ENCODE measurements at regions of chr17 and their contacts with region 1.

Region 1: DNA sequence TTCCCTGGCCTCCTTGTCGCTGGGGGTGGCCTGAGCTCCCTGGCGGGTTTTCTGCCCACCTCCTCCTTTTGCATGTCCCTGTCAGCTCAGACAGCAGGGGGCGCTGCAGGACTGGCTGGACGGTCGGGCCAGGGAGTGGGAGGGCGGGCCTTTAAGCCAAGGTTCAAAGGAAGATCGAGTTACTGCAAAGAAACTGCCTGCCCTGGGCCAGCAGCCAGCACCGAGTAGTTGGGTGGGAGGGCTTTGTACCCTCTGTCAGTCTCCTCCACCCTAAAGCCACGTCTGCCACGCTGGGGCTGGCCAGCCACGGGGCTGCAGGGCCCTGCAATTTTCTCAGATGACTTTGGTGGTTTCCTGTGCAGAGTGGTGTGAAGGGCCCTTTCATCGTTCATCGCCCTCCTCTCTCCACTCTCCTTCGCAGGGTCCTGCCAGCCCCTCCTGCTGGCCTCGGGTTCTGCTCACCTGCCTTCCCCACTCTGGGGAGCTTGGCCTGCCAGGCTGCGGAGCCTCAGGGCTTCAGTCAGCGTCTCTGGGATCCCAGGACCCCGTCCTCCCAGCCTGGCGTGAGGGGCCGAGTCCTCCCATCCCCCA is 12.3 kb downstream of the GPR142 start:
- DNase-seq: peak; percentile 83
- ATAC-seq: peak; percentile 73
- H3K4me3 ChIP-seq: no peak overlapping the region
- H3K4me3 Mint-ChIP-seq: no peak overlapping the region
- H3K27ac ChIP-seq: no peak overlapping the region
- H3K27ac Mint-ChIP-seq: no peak overlapping the region
- H3K4me1 ChIP-seq: peaks cover 5 to 9% of the 10 kb centered on the region in 2 donors
- H3K4me1 Mint-ChIP-seq: no peaks in the 10 kb centered on the region
- H3K27me3 ChIP-seq: peaks cover 0 to 15% (median 3%) of the 10 kb centered on the region in 4 experiments
- H3K27me3 Mint-ChIP-seq: peaks cover 19% of the 10 kb centered on the region
- CTCF ChIP-seq: peak; percentile 76

Region 2: DNA sequence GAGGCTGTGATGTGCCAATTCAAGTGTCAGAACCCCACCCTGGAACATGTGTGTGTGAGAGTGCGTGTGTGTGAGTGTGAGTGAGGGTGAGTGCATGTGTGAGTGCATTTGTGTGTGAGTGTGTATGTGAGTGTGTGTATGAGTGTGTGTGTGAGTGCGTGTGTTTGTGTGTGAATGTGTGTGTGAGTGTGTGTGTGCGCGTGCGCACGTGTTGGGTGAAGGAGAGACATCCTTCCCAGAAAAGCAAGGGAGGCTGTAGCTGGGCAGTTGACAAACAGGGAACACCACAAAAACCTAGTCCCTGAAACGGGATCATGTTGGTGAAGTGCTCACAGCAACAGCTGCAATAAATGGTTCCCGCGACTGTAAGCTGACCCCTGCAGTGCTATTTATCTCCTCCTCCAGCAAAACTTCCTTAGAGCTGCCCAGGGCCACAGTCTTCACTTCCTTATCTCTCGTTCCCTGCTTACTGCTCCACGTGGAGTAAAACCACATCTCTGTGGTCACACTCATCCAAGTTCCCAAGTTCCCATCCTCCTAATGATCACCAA is 216.2 kb before region 1 on chr17:
- CTCF ChIA-PET with region 1: no interaction called
- POLR2A ChIA-PET with region 1: no interaction called
- intact Hi-C with region 1: no loop called
- DNase-seq: no peak
- ATAC-seq: no peak
- H3K4me3 ChIP-seq: no peak overlapping the region
- H3K4me3 Mint-ChIP-seq: no peak overlapping the region
- H3K27ac ChIP-seq: no peak overlapping the region
- H3K27ac Mint-ChIP-seq: no peak overlapping the region
- H3K4me1 ChIP-seq: no peaks in the 10 kb centered on the region
- H3K4me1 Mint-ChIP-seq: peaks cover 4% of the 10 kb centered on the region
- H3K27me3 ChIP-seq: peaks cover 0 to 11% (median 9%) of the 10 kb centered on the region in 4 experiments
- H3K27me3 Mint-ChIP-seq: peaks cover 37% of the 10 kb centered on the region
- CTCF ChIP-seq: no peak

Region 3: GRCh38 chr17:74282587-74283370 is 96.8 kb before region 1 on chr17:
- CTCF ChIA-PET with region 1: no interaction called
- POLR2A ChIA-PET with region 1: no interaction called
- intact Hi-C with region 1: no loop called
- DNase-seq: no peak
- ATAC-seq: no peak
- H3K4me3 ChIP-seq: no peak overlapping the region
- H3K4me3 Mint-ChIP-seq: no peak overlapping the region
- H3K27ac ChIP-seq: no peak overlapping the region
- H3K27ac Mint-ChIP-seq: no peak overlapping the region
- H3K4me1 ChIP-seq: peaks cover 0 to 13% of the 10 kb centered on the region in 2 donors
- H3K4me1 Mint-ChIP-seq: peaks cover 5% of the 10 kb centered on the region
- H3K27me3 ChIP-seq: peaks cover 0 to 5% (median 2%) of the 10 kb centered on the region in 4 experiments
- H3K27me3 Mint-ChIP-seq: peaks cover 3% of the 10 kb centered on the region
- CTCF ChIP-seq: no peak

Region 4: GRCh38 chr17:74493381-74493833 is 113.8 kb after region 1 on chr17:
- CTCF ChIA-PET with region 1: interaction called, 11 read pairs
- POLR2A ChIA-PET with region 1: no interaction called
- intact Hi-C with region 1: no loop called
- DNase-seq: peak; percentile 68
- ATAC-seq: peak; percentile 80
- H3K4me3 ChIP-seq: no peak overlapping the region
- H3K4me3 Mint-ChIP-seq: no peak overlapping the region
- H3K27ac ChIP-seq: no peak overlapping the region
- H3K27ac Mint-ChIP-seq: no peak overlapping the region
- H3K4me1 ChIP-seq: no peaks in the 10 kb centered on the region
- H3K4me1 Mint-ChIP-seq: no peaks in the 10 kb centered on the region
- H3K27me3 ChIP-seq: no peaks in the 10 kb centered on the region
- H3K27me3 Mint-ChIP-seq: peaks cover 10% of the 10 kb centered on the region
- CTCF ChIP-seq: peak; percentile 90